Activated B cell treated with CpG ODN at 0.5 μM for 24 hours (primary cell): ENCODE measurements at regions of chr13 and their contacts with region 1.

Region 1: DNA sequence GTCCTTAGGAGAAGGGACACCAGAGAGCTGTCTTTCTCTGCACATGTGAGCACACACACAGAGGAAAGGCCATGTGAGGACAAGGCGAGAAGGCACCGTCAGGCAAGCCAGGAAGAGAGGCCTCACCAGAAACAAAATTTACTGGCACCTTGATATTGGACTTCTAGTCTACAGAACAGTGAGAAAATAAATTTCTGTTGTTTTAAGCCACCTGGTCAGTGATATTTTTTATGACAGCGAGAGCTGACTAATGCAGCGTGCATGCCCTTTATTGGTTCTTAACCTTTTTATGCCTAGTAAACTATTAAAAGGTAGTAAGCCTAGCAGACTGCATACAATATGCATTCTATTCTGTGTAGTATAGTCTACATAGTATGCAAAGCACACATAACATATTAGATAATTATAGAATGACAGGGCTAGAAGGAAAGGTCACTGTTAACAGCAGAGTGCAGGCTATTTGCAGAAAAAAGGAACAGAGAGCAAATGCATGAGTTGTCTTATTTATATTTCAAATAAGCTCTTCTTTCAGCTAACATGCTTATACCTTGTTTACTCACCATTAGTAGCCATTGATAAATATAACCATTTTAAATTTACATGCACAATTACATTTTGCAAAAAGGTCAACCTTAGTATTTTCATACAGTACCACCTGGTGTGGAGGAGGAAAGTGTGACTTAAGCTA is 25.2 kb upstream of the KATNAL1 start:
- DNase-seq: no peak
- ATAC-seq: peak; percentile 79
- H3K4me3 Mint-ChIP-seq: peak overlapping the region; percentile 3
- H3K27ac Mint-ChIP-seq: peak overlapping the region; percentile 48
- H3K4me1 Mint-ChIP-seq: peaks cover 52% of the 10 kb centered on the region
- H3K27me3 Mint-ChIP-seq: no peaks in the 10 kb centered on the region
- CTCF ChIP-seq: no peak

Region 2: GRCh38 chr13:30306762-30307193 is 25.8 kb before region 1 on chr13:
- CTCF ChIA-PET with region 1: no interaction called
- POLR2A ChIA-PET with region 1: interaction called, 11 read pairs
- intact Hi-C with region 1: no loop called
- DNase-seq: peak; percentile 86
- ATAC-seq: peak; percentile 86
- H3K4me3 Mint-ChIP-seq: peak overlapping the region; percentile 90
- H3K27ac Mint-ChIP-seq: peak overlapping the region; percentile 85
- H3K4me1 Mint-ChIP-seq: peaks cover 72% of the 10 kb centered on the region
- H3K27me3 Mint-ChIP-seq: no peaks in the 10 kb centered on the region
- CTCF ChIP-seq: no peak

Region 3: DNA sequence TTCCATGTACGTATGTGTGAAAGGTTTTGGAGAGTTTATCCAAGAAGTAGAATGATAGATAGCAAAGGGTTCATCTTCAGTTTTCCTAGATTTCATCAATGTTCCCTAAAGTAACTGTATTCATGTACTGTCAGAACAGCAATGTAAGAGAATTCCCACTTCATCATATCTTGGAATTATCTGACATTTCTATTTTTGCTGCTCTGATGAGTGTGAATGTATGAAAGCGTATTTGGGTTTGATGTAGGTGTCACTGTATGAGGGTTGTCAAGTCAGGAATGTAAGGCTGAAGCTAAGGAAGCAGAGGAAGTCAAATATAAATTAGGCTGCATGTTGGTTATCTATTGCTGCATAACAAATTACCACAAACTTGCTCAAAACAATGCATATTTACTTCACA is 18.0 kb before region 1 on chr13:
- CTCF ChIA-PET with region 1: no interaction called
- POLR2A ChIA-PET with region 1: interaction called, 8 read pairs
- intact Hi-C with region 1: loop called (anchors 1 kb)
- DNase-seq: no peak
- ATAC-seq: no peak
- H3K4me3 Mint-ChIP-seq: no peak overlapping the region
- H3K27ac Mint-ChIP-seq: no peak overlapping the region
- H3K4me1 Mint-ChIP-seq: peaks cover 17% of the 10 kb centered on the region
- H3K27me3 Mint-ChIP-seq: no peaks in the 10 kb centered on the region
- CTCF ChIP-seq: no peak

Region 4: GRCh38 chr13:30892966-30893365 is 560.4 kb after region 1 on chr13:
- CTCF ChIA-PET with region 1: no interaction called
- POLR2A ChIA-PET with region 1: no interaction called
- intact Hi-C with region 1: no loop called
- DNase-seq: no peak
- ATAC-seq: no peak
- H3K4me3 Mint-ChIP-seq: no peak overlapping the region
- H3K27ac Mint-ChIP-seq: no peak overlapping the region
- H3K4me1 Mint-ChIP-seq: no peaks in the 10 kb centered on the region
- H3K27me3 Mint-ChIP-seq: peaks cover 25% of the 10 kb centered on the region
- CTCF ChIP-seq: no peak